K562 (cell line): ENCODE measurements at regions of chr9 and their contacts with region 1.

Region 1: GRCh38 chr9:35790385-35791296 is 750 bp upstream of the NPR2 start:
- DNase-seq: peak; percentile 70 to 74 (median 71)
- ATAC-seq: peak; percentile 97
- H3K4me3 ChIP-seq: no peak overlapping the region
- H3K27ac ChIP-seq: no peak overlapping the region
- H3K4me1 ChIP-seq: peaks cover 6% of the 10 kb centered on the region in 2 experiments; a peak in 4 of 5 replicates
- H3K27me3 ChIP-seq: no peaks in the 10 kb centered on the region
- CTCF ChIP-seq: peak; percentile 81 to 90 (median 86)
- EP300 ChIP-seq: no peak
- POLR2A ChIP-seq: no peak
- RAD21 ChIP-seq: peak; percentile 48 to 76

Region 2: GRCh38 chr9:35814841-35815543 is 24.4 kb after region 1 on chr9 and contains the start of gene HINT2:
- CTCF ChIA-PET with region 1: interaction called, 7 read pairs
- POLR2A ChIA-PET with region 1: no interaction called
- in situ Hi-C with region 1: no loop called
- intact Hi-C with region 1: loop called (anchors 1 kb)
- DNase-seq: peak; percentile 89 to 96 (median 92)
- ATAC-seq: peak; percentile 92
- H3K4me3 ChIP-seq: peak within 1 kb of the TSS; percentile 66
- H3K27ac ChIP-seq: peak within 1 kb of the TSS; percentile 94
- H3K4me1 ChIP-seq: peaks cover 17 to 31% of the 10 kb centered on the region in 2 experiments
- H3K27me3 ChIP-seq: no peaks in the 10 kb centered on the region
- CTCF ChIP-seq: no peak
- EP300 ChIP-seq: no peak
- POLR2A ChIP-seq: peak; percentile 86
- RAD21 ChIP-seq: no peak
- polyA plus RNA-seq, gene HINT2: 5.6 to 6.2 TPM

Region 3: DNA sequence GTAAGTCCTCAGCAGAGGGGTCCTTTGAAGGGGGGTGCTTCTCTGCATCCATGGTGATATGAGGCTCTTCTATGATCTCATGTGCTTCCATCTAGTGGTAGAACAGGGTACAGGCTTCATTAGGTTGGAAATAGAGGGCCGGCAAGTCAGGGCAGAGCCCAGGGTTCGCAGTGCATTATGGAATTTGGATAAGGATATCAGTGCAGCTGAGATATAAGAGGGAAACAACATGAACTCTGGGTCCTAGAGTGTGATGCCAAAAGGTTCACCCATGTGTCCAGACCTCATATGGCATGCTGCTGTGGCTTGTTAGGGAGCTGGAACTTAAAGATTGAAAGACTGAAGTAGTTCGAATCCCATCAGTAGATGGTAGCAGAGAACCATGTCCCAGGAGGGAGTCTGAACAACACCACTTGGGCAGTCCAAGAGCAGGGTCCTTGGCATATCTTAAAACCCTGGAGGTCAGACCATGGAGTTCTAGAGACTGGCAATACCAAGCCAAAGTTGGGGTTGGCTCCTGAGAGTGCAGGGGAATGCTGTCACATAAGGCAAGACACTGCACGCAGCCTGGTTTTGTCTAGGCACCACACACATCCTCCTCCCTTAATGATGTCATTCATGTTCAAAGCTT is 35.5 kb after region 1 on chr9:
- CTCF ChIA-PET with region 1: interaction called, 13 read pairs
- POLR2A ChIA-PET with region 1: no interaction called
- in situ Hi-C with region 1: no loop called
- intact Hi-C with region 1: loop called (anchors 1 kb)
- DNase-seq: peak; percentile 45 to 62 (median 46)
- ATAC-seq: peak; percentile 73
- H3K4me3 ChIP-seq: no peak overlapping the region
- H3K27ac ChIP-seq: no peak overlapping the region
- H3K4me1 ChIP-seq: peaks cover 0 to 12% of the 10 kb centered on the region in 2 experiments; a peak in 3 of 5 replicates
- H3K27me3 ChIP-seq: no peaks in the 10 kb centered on the region
- CTCF ChIP-seq: peak; percentile 60 to 73 (median 63)
- EP300 ChIP-seq: no peak
- POLR2A ChIP-seq: no peak
- RAD21 ChIP-seq: peak; percentile 47 to 54

Region 4: GRCh38 chr9:35844716-35845270 is 54.2 kb after region 1 on chr9:
- CTCF ChIA-PET with region 1: no interaction called
- POLR2A ChIA-PET with region 1: no interaction called
- in situ Hi-C with region 1: no loop called
- intact Hi-C with region 1: no loop called
- DNase-seq: no peak
- ATAC-seq: no peak
- H3K4me3 ChIP-seq: no peak overlapping the region
- H3K27ac ChIP-seq: no peak overlapping the region
- H3K4me1 ChIP-seq: peaks cover 0 to 11% of the 10 kb centered on the region in 2 experiments; a peak in 2 of 5 replicates
- H3K27me3 ChIP-seq: peaks cover 0 to 23% of the 10 kb centered on the region in 2 experiments; a peak in 4 of 5 replicates
- CTCF ChIP-seq: no peak
- EP300 ChIP-seq: no peak
- POLR2A ChIP-seq: no peak
- RAD21 ChIP-seq: no peak

Region 5: GRCh38 chr9:35882263-35882848 is 91.7 kb after region 1 on chr9:
- CTCF ChIA-PET with region 1: interaction called, 28 read pairs
- POLR2A ChIA-PET with region 1: no interaction called
- in situ Hi-C with region 1: loop called (anchors 10 kb)
- intact Hi-C with region 1: loop called (anchors 1 kb)
- DNase-seq: peak; percentile 64 to 75 (median 68)
- ATAC-seq: peak; percentile 85
- H3K4me3 ChIP-seq: no peak overlapping the region
- H3K27ac ChIP-seq: no peak overlapping the region
- H3K4me1 ChIP-seq: no peaks in the 10 kb centered on the region
- H3K27me3 ChIP-seq: no peaks in the 10 kb centered on the region
- CTCF ChIP-seq: peak; percentile 81 to 88 (median 85)
- EP300 ChIP-seq: no peak
- POLR2A ChIP-seq: no peak
- RAD21 ChIP-seq: peak; percentile 66 to 82

Region 6: GRCh38 chr9:35896570-35896969 is 105.9 kb after region 1 on chr9:
- CTCF ChIA-PET with region 1: no interaction called
- POLR2A ChIA-PET with region 1: no interaction called
- in situ Hi-C with region 1: no loop called
- intact Hi-C with region 1: no loop called
- DNase-seq: no peak
- ATAC-seq: no peak
- H3K4me3 ChIP-seq: no peak overlapping the region
- H3K27ac ChIP-seq: no peak overlapping the region
- H3K4me1 ChIP-seq: no peaks in the 10 kb centered on the region
- H3K27me3 ChIP-seq: peaks cover 0 to 6% of the 10 kb centered on the region in 2 experiments; a peak in 2 of 5 replicates
- CTCF ChIP-seq: no peak
- EP300 ChIP-seq: no peak
- POLR2A ChIP-seq: no peak
- RAD21 ChIP-seq: no peak

Region 7: DNA sequence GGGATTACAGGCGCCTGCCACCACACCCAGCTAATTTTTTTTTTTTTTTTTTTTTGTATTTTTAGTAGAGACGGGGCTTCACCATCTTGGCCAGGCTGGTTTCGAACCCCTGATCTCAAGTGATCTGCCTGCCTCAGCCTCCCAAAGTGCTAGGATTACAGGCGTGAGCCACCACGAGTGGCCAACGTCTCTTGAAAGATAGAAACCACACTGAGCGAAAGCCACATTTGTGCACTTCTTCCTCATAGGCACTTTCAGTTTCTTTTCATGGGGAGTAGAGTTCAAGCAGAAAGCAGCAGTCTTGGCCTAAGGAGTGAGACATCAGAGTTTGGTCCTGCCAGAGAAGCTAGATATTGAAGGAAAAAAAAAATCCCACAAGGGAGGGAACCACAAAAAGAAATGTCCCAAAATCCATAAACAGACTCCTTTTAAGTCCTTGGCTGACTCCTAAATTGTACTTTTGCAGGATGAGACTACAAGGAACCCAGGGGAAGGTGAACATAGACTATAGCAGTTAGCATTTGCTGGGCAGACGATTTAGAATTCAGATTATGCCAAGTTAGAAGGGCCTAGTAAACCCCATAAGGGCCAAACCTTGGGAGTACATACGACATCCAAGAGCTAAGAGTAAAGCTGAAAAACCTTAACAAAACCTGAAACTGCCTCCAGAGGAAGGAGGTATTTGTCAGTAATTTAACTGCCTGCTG is 302.0 kb after region 1 on chr9:
- CTCF ChIA-PET with region 1: no interaction called
- POLR2A ChIA-PET with region 1: no interaction called
- in situ Hi-C with region 1: no loop called
- intact Hi-C with region 1: no loop called
- DNase-seq: no peak
- ATAC-seq: no peak
- H3K4me3 ChIP-seq: no peak overlapping the region
- H3K27ac ChIP-seq: no peak overlapping the region
- H3K4me1 ChIP-seq: no peaks in the 10 kb centered on the region
- H3K27me3 ChIP-seq: no peaks in the 10 kb centered on the region
- CTCF ChIP-seq: no peak
- EP300 ChIP-seq: no peak
- POLR2A ChIP-seq: no peak
- RAD21 ChIP-seq: no peak